Aorta (tissue), 5 donors: ENCODE measurements at regions of chr3 and their contacts with region 1.

Region 1: GRCh38 chr3:196502775-196503195 is 783 bp downstream of the RNF168 start:
- DNase-seq: peak; percentile 74 to 82
- ATAC-seq: peak; percentile 79
- H3K4me3 ChIP-seq: peak overlapping the region; percentile 63 to 74
- H3K27ac ChIP-seq: peak overlapping the region; percentile 84 to 89
- H3K4me1 ChIP-seq: peaks cover 3 to 5% of the 10 kb centered on the region in 2 donors
- H3K27me3 ChIP-seq: no peaks in the 10 kb centered on the region

Region 2: DNA sequence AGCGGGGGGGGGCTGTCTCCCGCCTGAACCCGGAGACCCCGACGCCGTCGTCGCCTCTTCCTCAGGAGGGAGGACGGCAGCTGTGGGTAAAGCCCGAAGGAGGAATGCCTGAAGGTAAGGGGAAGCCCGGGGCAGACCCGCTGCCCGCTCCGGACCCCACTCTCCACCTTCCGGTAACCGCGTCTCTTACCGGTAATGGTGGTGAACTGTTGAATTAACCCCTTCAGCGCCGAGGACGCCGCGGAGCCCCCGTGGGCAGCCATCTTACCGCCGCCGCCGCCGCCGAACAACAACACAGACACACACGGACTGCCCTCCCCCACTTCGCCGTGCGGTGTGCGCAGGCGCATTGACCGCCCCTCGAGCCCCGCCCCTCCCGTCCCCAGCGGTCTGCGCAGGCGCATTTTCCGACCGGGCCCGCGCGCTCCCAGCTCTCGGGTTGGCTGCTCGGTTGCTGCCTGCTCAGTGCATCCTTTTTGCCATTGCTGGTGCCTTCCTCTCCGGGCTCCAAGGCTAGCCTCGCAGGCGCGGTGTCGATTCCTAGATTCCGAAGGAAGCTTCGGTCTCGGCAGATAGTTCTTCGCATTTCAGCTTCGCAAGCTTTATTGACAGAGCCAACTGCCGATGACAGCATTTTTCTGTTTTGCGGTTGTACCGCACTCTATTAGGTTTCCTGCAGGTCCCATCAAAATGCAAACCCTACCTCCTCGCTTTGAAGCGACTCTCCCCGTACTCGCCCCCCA is 70.5 kb before region 1 on chr3 and contains the start of gene UBXN7:
- intact Hi-C with region 1: loop called (anchors 2 to 5 kb)
- DNase-seq: peak; percentile 96 to 99
- ATAC-seq: peak; percentile 98
- H3K4me3 ChIP-seq: peak within 1 kb of the TSS; percentile 70 to 78
- H3K27ac ChIP-seq: peak within 1 kb of the TSS; percentile 60 to 69
- H3K4me1 ChIP-seq: no peaks in the 10 kb centered on the region
- H3K27me3 ChIP-seq: no peaks in the 10 kb centered on the region
- total RNA-seq, gene UBXN7: 40.4 to 57.1 TPM

Region 3: GRCh38 chr3:196568246-196569002 is 65.6 kb after region 1 on chr3 and contains the starts of genes FBXO45 and WDR53:
- intact Hi-C with region 1: loop called in 1 of 2 experiments (anchors 2 kb)
- DNase-seq: peak; percentile 98
- ATAC-seq: peak; percentile 99
- H3K4me3 ChIP-seq: peak within 1 kb of the TSS; percentile 76 to 79
- H3K27ac ChIP-seq: peak within 1 kb of the TSS in 1 of 2 donors; percentile 82
- H3K4me1 ChIP-seq: no peaks in the 10 kb centered on the region
- H3K27me3 ChIP-seq: no peaks in the 10 kb centered on the region
- total RNA-seq, gene FBXO45: 6.1 to 7.9 TPM
- total RNA-seq, gene WDR53: 11.0 to 11.4 TPM

Region 4: DNA sequence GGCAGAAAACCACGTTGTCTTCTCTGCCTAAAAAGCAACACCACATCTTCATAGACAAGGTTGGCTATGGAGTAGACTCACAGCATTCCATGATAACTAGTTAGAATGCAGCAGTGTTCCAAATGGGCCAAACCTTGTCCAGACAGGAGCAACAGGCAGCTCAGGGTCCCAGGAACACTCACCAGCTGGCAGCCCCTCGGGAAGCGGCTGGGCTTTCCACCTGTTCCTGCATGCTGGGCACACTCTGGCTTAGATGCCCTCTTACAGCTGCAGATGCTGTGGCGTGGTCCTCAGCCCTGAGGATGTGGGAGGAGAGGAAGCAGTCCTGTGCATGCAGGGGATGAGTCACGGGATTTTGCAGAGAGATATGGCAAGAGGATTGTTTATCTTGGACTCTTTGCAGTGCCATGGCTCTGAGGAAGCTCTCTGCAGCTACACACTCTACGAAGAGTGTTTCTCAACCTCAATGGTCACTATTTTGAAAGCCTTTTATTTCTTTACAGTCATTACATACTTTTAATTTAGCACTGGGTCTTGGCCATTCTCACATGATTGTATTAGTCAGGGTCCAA is 148.0 kb after region 1 on chr3:
- intact Hi-C with region 1: no loop called
- DNase-seq: peak in 1 of 2 donors; percentile 75
- ATAC-seq: peak; percentile 85
- H3K4me3 ChIP-seq: no peak overlapping the region
- H3K27ac ChIP-seq: no peak overlapping the region
- H3K4me1 ChIP-seq: no peaks in the 10 kb centered on the region
- H3K27me3 ChIP-seq: no peaks in the 10 kb centered on the region